Activated B cell treated with CpG ODN at 0.5 μM for 24 hours (primary cell): ENCODE measurements at regions of chr4 and their contacts with region 1.

Region 1: DNA sequence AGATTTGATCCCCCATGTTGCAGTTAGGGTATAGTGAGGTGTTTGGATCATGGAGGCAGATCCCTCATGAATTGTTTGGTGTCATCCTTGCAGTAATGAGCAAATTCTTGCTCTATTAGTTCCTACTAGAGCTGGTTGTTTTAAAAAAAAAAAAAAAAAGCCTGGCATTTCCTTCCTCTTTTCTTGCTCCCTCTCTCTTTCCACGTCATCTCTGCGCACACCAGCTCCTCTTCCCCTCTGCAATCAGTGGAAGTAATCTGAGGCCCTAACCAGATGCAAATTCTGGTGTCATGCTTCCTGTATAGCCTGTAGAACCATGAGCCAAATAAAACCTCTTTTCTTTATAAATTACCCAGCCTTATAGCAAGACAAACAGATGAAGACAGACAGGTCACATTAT is 24.5 kb downstream of the WDR17 start:
- DNase-seq: no peak
- ATAC-seq: peak; percentile 95
- H3K4me3 Mint-ChIP-seq: peak overlapping the region; percentile 9
- H3K27ac Mint-ChIP-seq: peak overlapping the region; percentile 33
- H3K4me1 Mint-ChIP-seq: peaks cover 20% of the 10 kb centered on the region
- H3K27me3 Mint-ChIP-seq: no peaks in the 10 kb centered on the region
- CTCF ChIP-seq: no peak

Region 2: DNA sequence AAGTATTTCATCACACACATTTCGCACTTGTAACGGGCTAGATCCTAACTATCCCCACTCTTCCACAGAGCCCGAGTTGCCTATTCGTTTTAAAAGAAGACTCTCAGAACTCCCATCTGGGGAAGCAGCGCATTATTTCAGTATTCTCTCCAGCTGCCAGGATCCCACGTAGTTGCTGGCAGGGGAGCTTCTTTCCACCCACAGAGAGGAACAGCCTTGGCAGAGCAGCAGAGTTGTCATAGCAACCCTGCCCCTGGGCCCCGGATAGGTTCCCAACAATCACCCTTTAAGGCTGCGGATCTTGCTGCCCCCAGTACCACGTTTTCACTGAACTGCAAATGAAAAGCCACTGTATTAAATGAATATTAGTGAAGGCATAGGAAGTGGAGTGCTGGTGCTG is 384.7 kb before region 1 on chr4:
- CTCF ChIA-PET with region 1: no interaction called
- POLR2A ChIA-PET with region 1: no interaction called
- intact Hi-C with region 1: no loop called
- DNase-seq: no peak
- ATAC-seq: no peak
- H3K4me3 Mint-ChIP-seq: no peak overlapping the region
- H3K27ac Mint-ChIP-seq: no peak overlapping the region
- H3K4me1 Mint-ChIP-seq: no peaks in the 10 kb centered on the region
- H3K27me3 Mint-ChIP-seq: no peaks in the 10 kb centered on the region
- CTCF ChIP-seq: no peak

Region 3: GRCh38 chr4:176065435-176066291 is 24.5 kb before region 1 on chr4 and contains the start of gene WDR17:
- CTCF ChIA-PET with region 1: no interaction called
- POLR2A ChIA-PET with region 1: no interaction called
- intact Hi-C with region 1: loop called (anchors 1 kb)
- DNase-seq: peak; percentile 79
- ATAC-seq: peak; percentile 97
- H3K4me3 Mint-ChIP-seq: peak within 1 kb of the TSS; percentile 90
- H3K27ac Mint-ChIP-seq: peak within 1 kb of the TSS; percentile 73
- H3K4me1 Mint-ChIP-seq: peaks cover 11% of the 10 kb centered on the region
- H3K27me3 Mint-ChIP-seq: peaks cover 3% of the 10 kb centered on the region
- CTCF ChIP-seq: no peak
- total RNA-seq, gene WDR17: 5.7 and 6.2 TPM in 2 replicates